Activated B cell treated with CpG ODN at 0.5 μM for 24 hours (primary cell): ENCODE measurements at regions of chr16 and their contacts with region 1.

Region 1: DNA sequence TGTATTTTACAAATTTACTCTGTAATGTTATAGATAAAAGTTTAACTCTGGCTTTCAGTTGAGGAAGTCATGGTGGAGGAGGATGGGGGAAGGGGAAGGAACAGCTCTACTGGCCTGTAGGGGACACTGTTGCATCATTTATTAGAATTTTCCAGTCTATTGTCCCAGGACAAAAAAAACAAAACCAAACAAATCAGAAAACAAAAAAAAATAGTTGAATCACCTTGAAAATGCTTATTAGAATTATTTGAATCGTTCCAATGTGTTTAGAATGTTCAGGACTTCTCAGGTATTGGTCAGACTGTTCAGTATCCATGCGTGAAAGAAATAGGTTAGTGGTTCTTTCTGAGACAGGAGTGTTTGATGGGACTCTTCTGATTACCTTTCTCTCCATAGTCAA is 242.0 kb downstream of the FTO start:
- DNase-seq: no peak
- ATAC-seq: no peak
- H3K4me3 Mint-ChIP-seq: no peak overlapping the region
- H3K27ac Mint-ChIP-seq: no peak overlapping the region
- H3K4me1 Mint-ChIP-seq: peaks cover 26% of the 10 kb centered on the region
- H3K27me3 Mint-ChIP-seq: no peaks in the 10 kb centered on the region
- CTCF ChIP-seq: no peak

Region 2: DNA sequence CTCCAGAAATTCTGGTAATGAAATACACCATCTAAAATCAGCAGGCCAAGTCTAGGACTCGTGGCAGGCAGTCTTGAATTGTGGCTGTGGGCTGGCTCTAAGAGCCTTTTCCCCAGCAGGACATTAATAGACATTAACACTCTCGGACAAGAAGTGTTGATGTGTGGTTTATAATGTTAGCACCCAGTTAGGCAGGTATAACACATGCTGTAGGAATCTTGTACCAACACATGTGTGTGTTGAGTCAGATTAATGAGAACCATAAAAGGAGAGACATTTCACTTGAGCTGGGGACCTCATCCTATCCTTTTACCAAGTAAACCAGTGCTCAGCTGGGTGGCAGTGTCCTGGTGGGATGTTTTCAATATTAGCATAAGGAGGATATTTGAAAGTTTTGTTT is 22.5 kb after region 1 on chr16:
- CTCF ChIA-PET with region 1: no interaction called
- POLR2A ChIA-PET with region 1: no interaction called
- intact Hi-C with region 1: no loop called
- DNase-seq: no peak
- ATAC-seq: no peak
- H3K4me3 Mint-ChIP-seq: no peak overlapping the region
- H3K27ac Mint-ChIP-seq: no peak overlapping the region
- H3K4me1 Mint-ChIP-seq: no peaks in the 10 kb centered on the region
- H3K27me3 Mint-ChIP-seq: no peaks in the 10 kb centered on the region
- CTCF ChIP-seq: no peak

Region 3: GRCh38 chr16:55257966-55258613 is 1312.1 kb after region 1 on chr16:
- CTCF ChIA-PET with region 1: no interaction called
- POLR2A ChIA-PET with region 1: no interaction called
- intact Hi-C with region 1: loop called (anchors 5 kb)
- DNase-seq: no peak
- ATAC-seq: no peak
- H3K4me3 Mint-ChIP-seq: no peak overlapping the region
- H3K27ac Mint-ChIP-seq: no peak overlapping the region
- H3K4me1 Mint-ChIP-seq: peaks cover 2% of the 10 kb centered on the region
- H3K27me3 Mint-ChIP-seq: no peaks in the 10 kb centered on the region
- CTCF ChIP-seq: no peak

Region 4: GRCh38 chr16:55701442-55702319 is 1755.7 kb after region 1 on chr16:
- CTCF ChIA-PET with region 1: no interaction called
- POLR2A ChIA-PET with region 1: no interaction called
- intact Hi-C with region 1: loop called (anchors 5 kb)
- DNase-seq: no peak
- ATAC-seq: no peak
- H3K4me3 Mint-ChIP-seq: no peak overlapping the region
- H3K27ac Mint-ChIP-seq: no peak overlapping the region
- H3K4me1 Mint-ChIP-seq: no peaks in the 10 kb centered on the region
- H3K27me3 Mint-ChIP-seq: peaks cover 5% of the 10 kb centered on the region
- CTCF ChIP-seq: no peak